Mammary epithelial cell (primary cell): ENCODE measurements at regions of chrX and their contacts with region 1.

Region 1: DNA sequence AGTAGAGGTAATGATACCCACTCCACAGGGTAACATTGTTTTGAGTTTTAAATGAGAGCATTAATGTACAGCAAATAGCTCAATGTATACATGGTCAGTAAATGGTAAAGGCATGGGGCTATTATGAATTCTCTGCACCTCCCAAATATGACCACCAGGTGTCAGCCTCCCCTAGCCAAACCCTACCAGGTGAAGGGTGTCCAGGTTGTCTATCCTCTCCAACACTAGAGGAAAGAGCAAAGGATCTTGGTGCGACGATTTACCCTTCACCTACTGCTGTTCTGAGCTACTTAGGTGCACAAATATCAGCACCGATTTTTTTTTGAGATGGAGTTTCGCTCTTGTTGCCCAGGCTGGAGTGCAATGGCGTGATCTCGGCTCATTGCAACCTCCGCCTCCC is 26.5 kb upstream of the XIAP start:
- DNase-seq: peak; percentile 42
- H3K4me3 ChIP-seq: no peak overlapping the region
- H3K27ac ChIP-seq: no peak overlapping the region
- H3K4me1 ChIP-seq: peaks cover 5% of the 10 kb centered on the region
- H3K27me3 ChIP-seq: no peaks in the 10 kb centered on the region
- CTCF ChIP-seq: peak; percentile 64 to 74

Region 2: GRCh38 chrX:123665197-123665596 is 168.2 kb before region 1 on chrX:
- CTCF ChIA-PET with region 1: no interaction called
- dilution Hi-C with region 1: no loop called
- in situ Hi-C with region 1: no loop called
- intact Hi-C with region 1: no loop called
- DNase-seq: peak; percentile 77
- H3K4me3 ChIP-seq: no peak overlapping the region
- H3K27ac ChIP-seq: peak overlapping the region; percentile 68
- H3K4me1 ChIP-seq: peaks cover 12% of the 10 kb centered on the region
- H3K27me3 ChIP-seq: no peaks in the 10 kb centered on the region
- CTCF ChIP-seq: no peak

Region 3: DNA sequence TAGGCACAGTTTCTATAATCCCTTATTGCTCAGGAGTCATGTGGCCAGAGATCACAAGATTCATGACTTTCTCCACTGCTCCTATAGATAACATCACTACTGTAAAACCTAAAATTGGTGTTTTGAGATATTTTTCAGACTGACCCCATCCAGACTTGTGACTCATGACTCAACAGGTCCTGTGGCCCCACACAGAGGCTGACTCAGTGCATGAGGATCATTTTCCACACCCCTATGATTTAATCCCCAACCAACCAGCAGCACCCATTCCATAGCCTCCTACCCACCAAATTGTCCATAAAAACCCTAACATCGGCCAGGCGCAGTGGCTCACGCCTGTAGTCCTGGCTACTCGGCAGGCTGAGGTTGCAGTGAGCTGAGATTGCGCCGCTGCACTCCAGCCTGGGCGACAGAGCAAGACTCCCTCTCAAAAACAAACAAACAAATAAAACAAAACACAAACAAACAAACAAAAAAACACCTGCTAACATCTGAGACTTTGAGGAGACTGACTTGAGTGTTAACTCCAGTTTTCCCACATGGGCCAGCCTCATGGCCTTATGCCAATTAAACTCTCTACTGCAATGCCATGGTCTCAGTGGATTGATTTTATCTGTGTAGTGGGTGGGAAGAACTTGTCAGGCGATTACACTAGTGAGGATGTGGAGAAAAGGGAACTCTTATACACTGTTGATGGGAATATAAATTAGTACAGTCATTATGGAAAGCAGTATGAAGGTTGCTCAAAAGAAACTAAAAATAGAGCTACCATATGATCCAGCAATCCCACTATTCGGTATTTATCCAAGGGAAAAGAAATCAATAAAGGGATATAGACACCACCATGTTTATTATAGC is 13.4 kb after region 1 on chrX:
- CTCF ChIA-PET with region 1: interaction called, 17 read pairs
- dilution Hi-C with region 1: no loop called
- in situ Hi-C with region 1: no loop called
- intact Hi-C with region 1: no loop called
- DNase-seq: peak; percentile 44
- H3K4me3 ChIP-seq: no peak overlapping the region
- H3K27ac ChIP-seq: no peak overlapping the region
- H3K4me1 ChIP-seq: no peaks in the 10 kb centered on the region
- H3K27me3 ChIP-seq: no peaks in the 10 kb centered on the region
- CTCF ChIP-seq: no peak

Region 4: DNA sequence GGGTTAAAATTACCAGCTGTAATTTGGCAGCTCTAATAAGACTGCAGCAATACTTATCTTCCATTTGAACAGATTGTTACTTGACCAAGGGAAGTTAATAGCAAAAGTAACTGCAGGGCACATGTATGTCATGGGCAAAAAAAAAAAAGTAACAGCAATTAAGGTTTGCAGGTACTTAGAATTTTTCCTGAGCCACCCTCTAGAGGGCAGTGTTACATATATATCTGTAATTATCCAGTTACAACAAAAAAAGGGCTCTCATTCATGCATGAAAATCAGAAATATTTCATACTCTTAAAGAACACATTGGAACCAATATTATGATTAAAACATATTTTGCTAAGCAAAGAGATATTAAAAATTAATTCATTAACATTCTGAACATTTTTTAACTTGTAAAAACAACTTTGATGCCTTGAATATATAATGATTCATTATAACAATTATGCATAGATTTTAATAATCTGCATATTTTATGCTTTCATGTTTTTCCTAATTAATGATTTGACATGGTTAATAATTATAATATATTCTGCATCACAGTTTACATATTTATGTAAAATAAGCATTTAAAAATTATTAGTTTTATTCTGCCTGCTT is 51.5 kb after region 1 on chrX:
- CTCF ChIA-PET with region 1: no interaction called
- dilution Hi-C with region 1: no loop called
- in situ Hi-C with region 1: no loop called
- intact Hi-C with region 1: loop called (anchors 2 kb)
- DNase-seq: peak; percentile 30
- H3K4me3 ChIP-seq: no peak overlapping the region
- H3K27ac ChIP-seq: no peak overlapping the region
- H3K4me1 ChIP-seq: no peaks in the 10 kb centered on the region
- H3K27me3 ChIP-seq: no peaks in the 10 kb centered on the region
- CTCF ChIP-seq: peak; percentile 56

Region 5: DNA sequence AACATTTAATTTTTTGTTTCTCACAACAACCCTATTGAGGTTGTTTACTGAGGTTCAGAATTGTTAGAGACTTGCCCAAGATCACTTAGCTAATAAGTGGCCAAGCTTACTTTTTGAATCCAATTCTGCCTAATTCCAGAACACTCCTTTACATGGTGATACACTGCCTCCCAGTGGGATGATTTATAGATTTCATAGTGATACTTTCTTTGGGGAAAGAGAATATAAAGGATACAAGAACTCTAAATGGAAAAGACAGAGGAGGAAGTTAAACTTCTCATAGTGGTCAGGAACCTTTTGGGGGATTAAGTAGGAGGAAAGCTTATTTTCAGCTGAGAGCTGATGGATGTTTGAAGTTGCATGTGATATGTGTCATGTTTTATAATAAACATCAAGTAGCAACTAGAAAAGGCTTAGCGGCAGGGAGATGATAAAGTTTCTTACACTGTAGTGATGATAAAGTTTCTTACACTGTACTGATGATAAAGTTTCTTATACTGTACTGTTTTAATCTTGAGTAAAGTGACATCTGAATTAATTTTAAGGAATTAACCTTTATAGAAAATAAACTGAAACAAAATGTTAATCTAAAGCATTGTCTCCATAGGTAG is 143.4 kb after region 1 on chrX:
- CTCF ChIA-PET with region 1: interaction called, 3 read pairs
- dilution Hi-C with region 1: no loop called
- in situ Hi-C with region 1: no loop called
- intact Hi-C with region 1: loop called (anchors 1 kb)
- DNase-seq: peak; percentile 38
- H3K4me3 ChIP-seq: no peak overlapping the region
- H3K27ac ChIP-seq: no peak overlapping the region
- H3K4me1 ChIP-seq: no peaks in the 10 kb centered on the region
- H3K27me3 ChIP-seq: no peaks in the 10 kb centered on the region
- CTCF ChIP-seq: peak; percentile 16 to 39